ENCODE measurements at regions of chr4 and their contacts with region 1.

Region 1: GRCh38 chr4:103046416-103047290 is 27.1 kb upstream of the SLC9B1 start:
- DNase-seq: peak; percentile 45
- CTCF ChIP-seq: peak; percentile 79

Region 2: GRCh38 chr4:103030791-103031190 is 15.9 kb before region 1 on chr4:
- CTCF ChIA-PET with region 1: interaction called, 16 read pairs
- POLR2A ChIA-PET with region 1: no interaction called
- DNase-seq: no peak
- CTCF ChIP-seq: no peak

Region 3: GRCh38 chr4:103036169-103036568 is 10.5 kb before region 1 on chr4:
- CTCF ChIA-PET with region 1: interaction called, 16 read pairs
- POLR2A ChIA-PET with region 1: no interaction called
- DNase-seq: no peak
- CTCF ChIP-seq: no peak

Region 4: DNA sequence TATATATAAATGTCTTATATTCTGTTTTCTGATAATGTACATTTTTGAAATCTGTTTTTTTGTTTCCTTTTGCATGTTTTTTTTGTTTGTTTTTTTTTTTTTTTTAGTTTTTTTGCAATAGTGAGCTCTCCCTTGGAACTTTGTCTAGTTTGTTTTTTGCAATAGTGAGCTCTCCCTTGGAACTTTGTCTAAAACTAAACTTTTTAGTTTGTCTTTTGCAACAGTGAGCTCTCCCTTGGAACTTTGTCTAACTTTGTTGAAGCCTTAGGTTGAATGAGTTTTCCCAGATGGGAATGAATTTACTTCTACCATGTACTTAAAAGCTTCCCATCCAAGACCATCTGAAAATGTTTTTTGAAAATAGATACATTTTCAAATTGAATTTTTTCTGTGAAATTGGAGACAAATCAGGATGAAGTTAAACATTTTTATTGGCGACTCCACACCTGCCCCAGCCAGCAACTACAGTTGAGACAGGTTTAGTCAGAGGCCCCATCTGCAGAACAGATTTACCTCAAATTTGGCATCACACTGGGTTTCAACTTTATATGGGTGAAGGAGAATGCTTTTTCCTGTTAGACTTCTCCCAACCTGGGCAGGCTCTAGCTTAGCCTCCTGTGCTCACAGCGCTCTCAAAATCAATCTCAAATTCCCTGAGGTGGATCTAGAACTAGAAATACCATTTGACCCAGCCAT is 13.9 kb after region 1 on chr4:
- CTCF ChIA-PET with region 1: interaction called, 13 read pairs
- POLR2A ChIA-PET with region 1: no interaction called
- DNase-seq: no peak
- CTCF ChIP-seq: no peak

Region 5: DNA sequence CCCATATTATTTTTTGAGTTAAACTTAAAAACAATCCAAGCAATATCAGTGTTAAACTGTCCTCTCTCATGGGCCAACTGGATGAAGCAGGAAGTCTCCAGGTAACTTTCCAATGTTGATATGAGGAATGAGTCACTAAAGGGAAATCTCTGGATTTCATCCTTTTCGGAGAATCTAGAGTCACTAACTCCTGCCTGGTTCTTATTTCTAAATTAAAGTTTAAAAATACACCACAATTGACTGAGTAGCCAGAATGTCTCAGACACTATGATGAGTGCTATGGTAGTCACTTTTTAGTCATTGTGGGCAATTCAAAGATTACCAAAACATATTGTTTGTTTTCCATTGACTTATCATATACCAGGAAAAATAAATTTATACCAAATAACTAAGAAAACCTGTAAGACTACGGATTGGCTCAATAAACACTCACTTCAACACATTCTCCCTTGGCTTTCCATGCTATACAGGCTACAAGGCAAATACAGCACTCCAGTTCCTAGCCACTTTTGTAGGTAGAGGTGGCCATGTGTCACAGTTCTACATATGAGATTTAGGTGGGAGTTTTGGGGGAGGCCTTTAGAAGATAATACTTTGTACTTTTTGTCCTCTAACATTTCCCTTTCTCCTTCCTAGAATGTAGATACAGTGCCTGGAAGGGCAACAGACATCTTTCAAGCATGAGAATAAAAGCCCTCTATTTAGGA is 21.3 kb after region 1 on chr4:
- CTCF ChIA-PET with region 1: interaction called, 13 read pairs
- POLR2A ChIA-PET with region 1: no interaction called
- DNase-seq: no peak
- CTCF ChIP-seq: no peak

Region 6: DNA sequence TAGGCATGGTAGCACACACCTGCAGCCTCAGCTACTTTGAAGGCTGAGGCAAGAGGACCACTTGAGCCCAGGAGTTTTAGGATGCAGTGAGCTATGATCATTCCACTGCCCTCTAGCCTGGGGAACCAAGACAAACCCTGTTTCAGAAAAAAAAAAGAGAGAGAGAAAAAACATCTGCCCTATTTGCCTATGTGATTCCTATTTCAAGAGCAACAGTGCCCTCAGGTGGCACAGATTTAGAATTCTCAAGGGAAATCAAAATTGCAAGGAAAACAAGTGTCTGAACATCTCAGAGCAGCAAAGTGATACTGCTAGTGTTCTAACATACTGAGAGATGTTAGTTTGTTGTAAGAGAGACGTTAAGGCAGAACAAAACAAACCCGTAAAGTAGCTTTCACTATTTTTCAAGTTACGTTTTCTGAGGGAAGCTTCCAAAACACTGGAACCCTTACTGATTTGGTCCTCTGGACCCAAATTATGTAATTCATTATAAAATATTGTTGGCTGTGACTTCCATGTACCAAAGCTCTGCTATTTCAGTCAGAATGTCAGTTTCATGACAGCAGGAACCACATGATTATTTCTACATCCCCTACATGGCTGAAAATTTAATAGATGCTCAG is 45.1 kb after region 1 on chr4:
- CTCF ChIA-PET with region 1: interaction called, 62 read pairs
- POLR2A ChIA-PET with region 1: no interaction called
- DNase-seq: peak; percentile 30
- CTCF ChIP-seq: peak; percentile 65

Region 7: GRCh38 chr4:103099691-103100392 is 53.2 kb after region 1 on chr4 and contains the start of gene BDH2:
- CTCF ChIA-PET with region 1: interaction called, 19 read pairs
- POLR2A ChIA-PET with region 1: no interaction called
- DNase-seq: peak; percentile 83
- CTCF ChIP-seq: peak; percentile 60

Region 8: GRCh38 chr4:103137446-103137827 is 90.8 kb after region 1 on chr4:
- CTCF ChIA-PET with region 1: no interaction called
- POLR2A ChIA-PET with region 1: no interaction called
- DNase-seq: no peak
- CTCF ChIP-seq: no peak

Measured in GM10248 (cell line).